ENCODE measurements at regions of chr22 and their contacts with region 1.

Region 1: GRCh38 chr22:25013607-25014006 is 61.1 kb downstream of the KIAA1671 start:
- DNase-seq: peak; percentile 74
- H3K4me3 ChIP-seq: no peak overlapping the region
- H3K27ac ChIP-seq: peak overlapping the region; percentile 55
- H3K4me1 ChIP-seq: peaks cover 30% of the 10 kb centered on the region
- H3K27me3 ChIP-seq: no peaks in the 10 kb centered on the region
- CTCF ChIP-seq: no peak
- POLR2A ChIP-seq: no peak

Region 2: DNA sequence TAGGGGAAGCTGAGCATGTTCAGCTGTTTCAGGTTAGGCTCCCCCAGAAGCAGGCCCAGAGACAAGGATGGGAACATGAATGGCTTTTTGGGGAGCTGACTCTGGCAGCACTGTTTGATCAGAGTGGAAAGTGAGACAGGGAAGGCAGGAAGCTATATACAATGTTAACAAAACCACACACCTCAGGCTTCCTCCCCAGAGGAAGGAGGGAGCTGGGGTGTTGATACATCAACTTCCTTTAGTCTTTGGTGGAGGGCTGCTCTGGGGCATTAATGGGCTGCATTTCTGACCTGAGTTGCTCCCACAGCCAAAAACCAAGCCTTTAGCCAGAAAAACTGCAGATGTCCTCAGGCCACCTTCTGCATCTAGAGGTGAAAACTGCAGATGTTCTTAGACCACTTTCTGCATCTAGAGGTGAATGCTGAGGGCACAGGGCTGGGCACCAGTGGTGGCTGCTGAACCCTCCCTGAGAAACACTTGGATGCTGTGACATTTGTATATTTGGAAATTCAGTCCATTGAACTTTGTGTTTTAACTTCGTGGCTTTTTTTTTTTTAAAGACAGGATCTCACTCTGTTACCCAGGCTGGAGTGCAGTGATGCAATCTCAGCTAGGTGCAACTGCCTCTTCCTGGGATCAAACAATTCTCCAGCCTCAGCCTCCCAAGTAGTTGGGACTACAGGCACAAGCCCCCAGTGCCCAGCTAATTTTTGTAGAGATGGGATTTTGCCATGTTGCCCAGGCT is 11.2 kb before region 1 on chr22:
- CTCF ChIA-PET with region 1: interaction called, 7 read pairs
- POLR2A ChIA-PET with region 1: no interaction called
- dilution Hi-C with region 1: no loop called
- intact Hi-C with region 1: loop called (anchors 1 kb)
- DNase-seq: peak; percentile 35
- H3K4me3 ChIP-seq: no peak overlapping the region
- H3K27ac ChIP-seq: peak overlapping the region; percentile 44
- H3K4me1 ChIP-seq: peaks cover 17% of the 10 kb centered on the region
- H3K27me3 ChIP-seq: no peaks in the 10 kb centered on the region
- CTCF ChIP-seq: no peak
- POLR2A ChIP-seq: no peak

Region 3: GRCh38 chr22:25193548-25193947 is 179.9 kb after region 1 on chr22:
- CTCF ChIA-PET with region 1: no interaction called
- POLR2A ChIA-PET with region 1: no interaction called
- dilution Hi-C with region 1: no loop called
- intact Hi-C with region 1: no loop called
- DNase-seq: no peak
- H3K4me3 ChIP-seq: no peak overlapping the region
- H3K27ac ChIP-seq: no peak overlapping the region
- H3K4me1 ChIP-seq: no peaks in the 10 kb centered on the region
- H3K27me3 ChIP-seq: no peaks in the 10 kb centered on the region
- CTCF ChIP-seq: no peak
- POLR2A ChIP-seq: no peak

Measured in endothelial cell of umbilical vein (primary cell).